ENCODE measurements at regions of chr6 and their contacts with region 1.

Region 1: DNA sequence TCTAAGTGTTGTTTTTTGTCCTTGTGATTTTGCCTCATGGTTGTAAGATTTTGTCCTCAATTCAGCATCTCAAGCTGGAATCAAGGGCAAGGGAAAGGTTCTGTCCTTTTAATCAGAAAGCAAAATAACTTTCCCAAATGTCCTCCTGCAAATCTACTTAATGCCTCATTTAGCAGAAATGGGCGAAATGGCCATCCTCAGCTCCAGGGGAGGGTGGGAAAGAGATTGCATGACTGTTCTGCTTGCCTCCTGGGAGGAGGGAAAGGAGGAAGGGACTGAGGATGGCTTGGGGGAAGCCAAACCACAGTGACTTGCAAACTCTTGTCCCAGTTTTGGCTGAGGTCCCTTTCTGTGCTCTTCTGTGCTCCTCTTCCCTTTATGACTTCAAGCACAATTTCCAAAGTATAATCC is 43.4 kb downstream of the TNFAIP3 start:
- DNase-seq: no peak
- ATAC-seq: no peak
- H3K4me3 ChIP-seq: no peak overlapping the region
- H3K27ac ChIP-seq: peak overlapping the region; percentile 95
- H3K4me1 ChIP-seq: peaks cover 48% of the 10 kb centered on the region
- H3K27me3 ChIP-seq: no peaks in the 10 kb centered on the region
- CTCF ChIP-seq: no peak
- EP300 ChIP-seq: no peak
- POLR2A ChIP-seq: no peak
- RAD21 ChIP-seq: no peak

Region 2: DNA sequence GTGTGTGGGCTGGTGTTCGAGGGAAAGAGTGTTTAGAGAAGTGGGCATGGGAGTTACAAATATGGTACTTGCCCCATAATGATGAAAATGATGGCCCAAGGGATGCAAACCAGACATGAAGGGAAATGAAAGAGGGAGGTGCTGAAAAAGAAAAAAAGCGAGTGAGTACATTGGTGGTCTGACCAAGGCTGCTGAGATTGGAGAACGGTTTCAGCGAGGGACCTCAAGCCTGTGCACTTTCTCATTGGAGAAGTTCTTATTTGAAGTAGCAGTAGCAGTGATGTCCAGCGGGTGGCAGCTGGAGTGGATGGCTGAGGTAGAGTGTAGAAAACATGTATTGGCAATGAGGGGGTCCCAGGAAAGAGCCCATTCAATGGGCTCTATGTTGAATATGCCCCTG is 11.4 kb after region 1 on chr6:
- CTCF ChIA-PET with region 1: interaction called, 60 read pairs
- POLR2A ChIA-PET with region 1: interaction called, 153 read pairs
- RAD21 ChIA-PET with region 1: interaction called, 65 read pairs
- SMC1A ChIA-PET with region 1: interaction called, 126 read pairs
- in situ Hi-C with region 1: no loop called
- intact Hi-C with region 1: loop called (anchors 1 kb)
- DNase-seq: no peak
- ATAC-seq: peak; percentile 61
- H3K4me3 ChIP-seq: no peak overlapping the region
- H3K27ac ChIP-seq: peak overlapping the region; percentile 33; the same call in 1 of the 2 replicates
- H3K4me1 ChIP-seq: peaks cover 65% of the 10 kb centered on the region
- H3K27me3 ChIP-seq: no peaks in the 10 kb centered on the region
- CTCF ChIP-seq: peak; percentile 16 to 33 (median 22); a peak in 3 of 6 replicates
- EP300 ChIP-seq: no peak
- POLR2A ChIP-seq: no peak
- RAD21 ChIP-seq: peak; percentile 51

Region 3: GRCh38 chr6:137927777-137928218 is 17.4 kb after region 1 on chr6:
- CTCF ChIA-PET with region 1: interaction called, 60 read pairs
- POLR2A ChIA-PET with region 1: interaction called, 153 read pairs
- RAD21 ChIA-PET with region 1: interaction called, 65 read pairs
- SMC1A ChIA-PET with region 1: interaction called, 126 read pairs
- in situ Hi-C with region 1: no loop called
- intact Hi-C with region 1: loop called (anchors 1 kb)
- DNase-seq: peak; percentile 99
- ATAC-seq: peak; percentile 93
- H3K4me3 ChIP-seq: peak overlapping the region; percentile 19; the same call in 1 of the 2 replicates
- H3K27ac ChIP-seq: peak overlapping the region; percentile 98
- H3K4me1 ChIP-seq: peaks cover 61% of the 10 kb centered on the region
- H3K27me3 ChIP-seq: no peaks in the 10 kb centered on the region
- CTCF ChIP-seq: no peak
- EP300 ChIP-seq: peak; percentile 91; a peak in 3 of 4 replicates
- POLR2A ChIP-seq: peak; percentile 69; the same call in 1 of the 2 replicates
- RAD21 ChIP-seq: 0 out of 2 replicates have a peak, but pooled peaks have one; percentile 4

Region 4: GRCh38 chr6:137933696-137934095 is 23.3 kb after region 1 on chr6:
- CTCF ChIA-PET with region 1: interaction called, 71 read pairs
- POLR2A ChIA-PET with region 1: interaction called, 28 read pairs
- RAD21 ChIA-PET with region 1: interaction called, 45 read pairs
- SMC1A ChIA-PET with region 1: interaction called, 102 read pairs
- in situ Hi-C with region 1: no loop called
- intact Hi-C with region 1: no loop called
- DNase-seq: no peak
- ATAC-seq: no peak
- H3K4me3 ChIP-seq: no peak overlapping the region
- H3K27ac ChIP-seq: peak overlapping the region; percentile 53
- H3K4me1 ChIP-seq: peaks cover 28% of the 10 kb centered on the region
- H3K27me3 ChIP-seq: no peaks in the 10 kb centered on the region
- CTCF ChIP-seq: no peak
- EP300 ChIP-seq: no peak
- POLR2A ChIP-seq: no peak
- RAD21 ChIP-seq: no peak

Region 5: DNA sequence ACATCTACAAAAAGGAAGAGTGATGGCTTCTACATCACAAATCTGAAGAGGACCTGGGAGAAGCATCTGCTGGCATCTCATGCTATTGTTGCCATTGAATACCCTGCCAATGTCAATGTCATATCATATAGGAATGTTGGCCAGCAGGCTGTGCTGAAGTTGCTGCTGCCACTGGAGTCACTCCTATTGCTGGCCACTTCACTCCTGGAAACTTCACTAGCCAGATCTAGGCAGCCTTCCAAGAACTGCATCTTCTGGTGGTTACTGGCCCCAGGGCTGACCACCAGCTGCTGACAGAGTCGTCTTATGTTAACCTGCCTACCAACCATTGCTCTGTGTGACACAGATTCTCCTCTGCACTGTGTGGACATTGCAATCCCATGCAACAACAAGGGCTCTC is 84.9 kb after region 1 on chr6:
- CTCF ChIA-PET with region 1: no interaction called
- POLR2A ChIA-PET with region 1: no interaction called
- RAD21 ChIA-PET with region 1: no interaction called
- SMC1A ChIA-PET with region 1: no interaction called
- in situ Hi-C with region 1: no loop called
- intact Hi-C with region 1: no loop called
- DNase-seq: no peak
- ATAC-seq: no peak
- H3K4me3 ChIP-seq: no peak overlapping the region
- H3K27ac ChIP-seq: no peak overlapping the region
- H3K4me1 ChIP-seq: no peaks in the 10 kb centered on the region
- H3K27me3 ChIP-seq: no peaks in the 10 kb centered on the region; a peak in 2 of 4 replicates
- CTCF ChIP-seq: no peak
- EP300 ChIP-seq: no peak
- POLR2A ChIP-seq: no peak
- RAD21 ChIP-seq: no peak

Region 6: GRCh38 chr6:138063726-138064125 is 153.3 kb after region 1 on chr6:
- CTCF ChIA-PET with region 1: no interaction called
- POLR2A ChIA-PET with region 1: no interaction called
- RAD21 ChIA-PET with region 1: no interaction called
- SMC1A ChIA-PET with region 1: no interaction called
- in situ Hi-C with region 1: no loop called
- intact Hi-C with region 1: no loop called
- DNase-seq: no peak
- ATAC-seq: no peak
- H3K4me3 ChIP-seq: no peak overlapping the region
- H3K27ac ChIP-seq: no peak overlapping the region
- H3K4me1 ChIP-seq: no peaks in the 10 kb centered on the region
- H3K27me3 ChIP-seq: no peaks in the 10 kb centered on the region
- CTCF ChIP-seq: no peak
- EP300 ChIP-seq: no peak
- POLR2A ChIP-seq: no peak
- RAD21 ChIP-seq: no peak